ENCODE measurements at regions of chr1 and their contacts with region 1.

Region 1: DNA sequence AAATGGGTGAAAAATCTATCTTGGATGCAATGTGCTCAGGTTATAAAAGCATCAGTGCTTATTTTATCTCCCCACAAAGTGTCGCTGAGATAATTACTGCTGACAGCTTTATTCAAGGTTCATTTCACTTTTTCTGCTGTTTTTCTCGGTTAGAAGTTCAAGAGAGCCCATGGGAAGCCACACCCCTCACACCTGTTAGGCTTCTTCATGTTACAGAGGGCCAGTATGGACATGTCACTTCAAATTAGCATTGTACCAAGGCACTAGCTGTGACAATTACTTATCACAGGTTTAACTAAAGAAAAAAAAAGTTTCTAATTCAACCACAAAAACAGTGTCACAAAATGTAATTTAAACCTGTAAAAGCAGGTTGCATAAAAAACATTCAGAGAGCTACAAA is 187.3 kb upstream of the DMRTA2 start:
- DNase-seq: no peak
- ATAC-seq: peak in 2 of 4 donors; percentile 31 to 44
- H3K4me3 ChIP-seq: no peak overlapping the region
- H3K27ac ChIP-seq: no peak overlapping the region
- H3K4me1 ChIP-seq: no peaks in the 10 kb centered on the region
- H3K27me3 ChIP-seq: no peaks in the 10 kb centered on the region
- CTCF ChIP-seq: no peak

Region 2: GRCh38 chr1:50369830-50370229 is 240.7 kb before region 1 on chr1:
- intact Hi-C with region 1: loop called in 1 of 3 experiments (anchors 10 kb)
- DNase-seq: no peak
- ATAC-seq: no peak
- H3K4me3 ChIP-seq: no peak overlapping the region
- H3K27ac ChIP-seq: no peak overlapping the region
- H3K4me1 ChIP-seq: no peaks in the 10 kb centered on the region
- H3K27me3 ChIP-seq: peaks cover 0 to 6% (median 0%) of the 10 kb centered on the region in 4 donors
- CTCF ChIP-seq: no peak

Region 3: DNA sequence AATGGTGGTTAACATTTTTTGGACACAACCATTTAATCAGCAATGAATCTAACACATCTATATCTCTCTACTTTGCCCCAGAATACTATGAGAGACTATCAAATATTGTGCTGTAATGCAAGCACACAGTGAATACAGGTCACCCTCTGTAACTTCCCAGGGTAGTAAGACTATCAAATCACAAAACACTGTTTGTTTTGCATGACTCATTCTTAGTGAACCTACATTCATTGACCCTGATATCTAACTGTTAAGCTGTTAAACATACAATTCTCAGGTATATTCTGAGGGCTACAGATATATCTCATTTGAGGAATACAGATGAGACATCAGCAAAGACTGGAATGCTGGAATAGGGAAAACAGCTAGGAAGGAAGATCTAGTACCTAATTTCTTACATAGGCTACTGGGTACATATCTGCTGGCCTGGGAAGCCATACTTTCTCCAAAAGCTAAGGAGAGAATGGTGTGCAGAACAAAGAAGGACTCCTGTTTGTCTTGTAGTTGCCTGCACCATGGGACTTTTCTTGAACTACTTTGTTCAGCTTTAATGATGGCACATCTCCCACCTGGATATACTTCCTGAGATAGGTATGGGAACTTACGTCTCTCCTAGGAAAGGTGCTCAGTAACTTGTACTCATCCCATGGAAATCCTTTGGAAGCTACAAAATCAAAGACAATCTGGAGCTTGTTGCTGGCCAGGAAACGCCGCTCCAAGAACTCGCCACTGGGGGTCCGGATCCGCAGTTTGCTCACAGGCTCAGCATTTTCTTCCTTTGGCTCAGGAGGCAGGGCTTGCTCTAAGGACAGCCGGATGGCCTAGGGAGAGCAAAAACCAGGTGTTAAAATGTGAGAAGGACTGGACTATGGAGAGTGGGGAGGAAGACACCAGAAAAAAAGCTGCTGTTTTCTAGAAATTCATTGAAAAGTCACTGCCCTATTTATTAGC is 135.4 kb before region 1 on chr1:
- intact Hi-C with region 1: no loop called
- DNase-seq: no peak
- ATAC-seq: peak; percentile 96 to 98 (median 98)
- H3K4me3 ChIP-seq: no peak overlapping the region
- H3K27ac ChIP-seq: no peak overlapping the region
- H3K4me1 ChIP-seq: peaks cover 8 to 35% (median 33%) of the 10 kb centered on the region in 3 donors
- H3K27me3 ChIP-seq: no peaks in the 10 kb centered on the region
- CTCF ChIP-seq: no peak

Measured in pancreas (tissue), 10 donors.